IMR-90 (cell line): ENCODE measurements at regions of chr10 and their contacts with region 1.

Region 1: DNA sequence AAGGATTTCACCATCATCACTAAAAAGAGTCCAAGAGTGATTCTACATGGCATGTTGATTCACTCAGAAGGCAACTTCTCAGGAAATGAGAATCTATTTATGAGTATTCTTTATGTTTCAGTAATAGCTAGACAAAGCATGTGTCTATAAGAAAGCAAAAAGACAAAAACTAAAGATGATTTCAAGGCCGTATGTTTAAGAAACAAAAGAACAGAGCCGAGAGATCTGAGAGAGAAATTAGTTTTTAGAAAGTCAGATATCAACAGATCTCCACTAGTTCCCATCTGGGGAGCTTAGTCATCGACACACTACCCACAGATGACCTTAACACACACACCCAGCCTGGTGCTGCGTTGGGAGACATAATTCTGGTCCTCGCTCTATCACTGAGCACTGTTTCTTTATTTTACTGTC is 21.0 kb downstream of the PIP4K2A start:
- DNase-seq: peak; percentile 84
- ATAC-seq: peak; percentile 89
- H3K4me3 ChIP-seq: no peak overlapping the region
- H3K27ac ChIP-seq: no peak overlapping the region
- H3K4me1 ChIP-seq: peaks cover 7% of the 10 kb centered on the region
- H3K27me3 ChIP-seq: no peaks in the 10 kb centered on the region
- CTCF ChIP-seq: no peak
- POLR2A ChIP-seq: no peak
- RAD21 ChIP-seq: no peak

Region 2: GRCh38 chr10:22316285-22317120 is 376.9 kb before region 1 on chr10 and contains the start of gene COMMD3:
- CTCF ChIA-PET with region 1: no interaction called
- POLR2A ChIA-PET with region 1: no interaction called
- dilution Hi-C with region 1: no loop called
- in situ Hi-C with region 1: loop called (anchors 10 kb)
- intact Hi-C with region 1: no loop called
- DNase-seq: peak; percentile 86
- ATAC-seq: peak; percentile 74
- H3K4me3 ChIP-seq: peak within 1 kb of the TSS; percentile 76
- H3K27ac ChIP-seq: peak within 1 kb of the TSS; percentile 93
- H3K4me1 ChIP-seq: no peaks in the 10 kb centered on the region
- H3K27me3 ChIP-seq: peaks cover 2% of the 10 kb centered on the region; the same call in 1 of the 2 replicates
- CTCF ChIP-seq: no peak
- POLR2A ChIP-seq: no peak
- RAD21 ChIP-seq: no peak
- total RNA-seq, gene COMMD3: 33.1 and 44.8 TPM in 2 replicates

Region 3: DNA sequence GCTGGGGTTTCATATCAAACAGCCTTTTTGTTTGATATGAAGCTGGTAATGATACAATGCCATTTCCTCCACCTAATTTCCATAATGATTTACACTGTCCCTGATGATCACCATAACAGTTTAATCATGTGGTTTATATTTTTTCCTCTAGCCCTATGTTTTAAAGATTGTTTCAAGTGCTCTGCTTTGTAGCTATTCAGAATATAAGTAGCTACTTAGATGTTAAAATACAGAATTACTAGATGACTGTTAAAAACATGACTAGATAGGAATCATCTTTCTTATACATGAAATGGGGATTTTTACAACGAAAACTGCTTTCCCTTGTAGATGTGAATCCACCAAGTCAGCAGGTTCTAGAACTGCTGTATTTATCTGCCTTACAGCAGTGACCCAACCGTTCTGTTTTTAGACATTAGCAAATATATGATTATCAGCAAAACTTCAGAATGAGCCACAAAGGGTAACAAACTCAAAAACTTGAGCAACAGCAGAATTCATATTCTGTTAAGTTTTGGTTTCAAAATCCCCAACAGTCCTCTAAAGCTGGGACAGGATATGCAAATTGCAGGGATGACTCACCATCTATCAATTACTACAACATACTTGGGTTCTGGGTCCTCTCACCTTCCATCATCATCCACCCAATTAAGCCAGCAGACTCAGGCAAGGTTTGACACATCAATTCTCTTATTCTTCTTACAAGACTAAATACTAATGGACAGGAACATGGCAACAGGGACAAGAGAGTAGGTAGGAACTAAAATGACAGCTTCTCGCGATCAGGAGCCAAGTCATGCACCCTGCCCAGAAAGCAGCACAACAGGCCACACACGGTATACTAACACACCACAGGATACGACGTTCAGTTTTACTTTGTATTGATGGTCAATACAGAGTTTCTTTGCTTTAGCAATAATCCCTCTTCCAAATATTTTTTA is 62.9 kb before region 1 on chr10:
- CTCF ChIA-PET with region 1: no interaction called
- POLR2A ChIA-PET with region 1: no interaction called
- dilution Hi-C with region 1: no loop called
- in situ Hi-C with region 1: no loop called
- intact Hi-C with region 1: no loop called
- DNase-seq: peak; percentile 67
- ATAC-seq: peak; percentile 50
- H3K4me3 ChIP-seq: no peak overlapping the region
- H3K27ac ChIP-seq: no peak overlapping the region
- H3K4me1 ChIP-seq: peaks cover 9% of the 10 kb centered on the region
- H3K27me3 ChIP-seq: no peaks in the 10 kb centered on the region
- CTCF ChIP-seq: no peak
- POLR2A ChIP-seq: no peak
- RAD21 ChIP-seq: no peak

Region 4: GRCh38 chr10:22681783-22682183 is 11.6 kb before region 1 on chr10:
- CTCF ChIA-PET with region 1: no interaction called
- POLR2A ChIA-PET with region 1: no interaction called
- dilution Hi-C with region 1: no loop called
- in situ Hi-C with region 1: no loop called
- intact Hi-C with region 1: no loop called
- DNase-seq: peak; percentile 74
- ATAC-seq: peak; percentile 80
- H3K4me3 ChIP-seq: no peak overlapping the region
- H3K27ac ChIP-seq: no peak overlapping the region
- H3K4me1 ChIP-seq: peaks cover 20% of the 10 kb centered on the region
- H3K27me3 ChIP-seq: no peaks in the 10 kb centered on the region
- CTCF ChIP-seq: no peak
- POLR2A ChIP-seq: no peak
- RAD21 ChIP-seq: no peak

Region 5: GRCh38 chr10:22780474-22780885 is 87.1 kb after region 1 on chr10:
- CTCF ChIA-PET with region 1: no interaction called
- POLR2A ChIA-PET with region 1: no interaction called
- dilution Hi-C with region 1: no loop called
- in situ Hi-C with region 1: no loop called
- intact Hi-C with region 1: no loop called
- DNase-seq: no peak
- ATAC-seq: no peak
- H3K4me3 ChIP-seq: no peak overlapping the region
- H3K27ac ChIP-seq: no peak overlapping the region
- H3K4me1 ChIP-seq: no peaks in the 10 kb centered on the region
- H3K27me3 ChIP-seq: peaks cover 2% of the 10 kb centered on the region; the same call in 1 of the 2 replicates
- CTCF ChIP-seq: no peak
- POLR2A ChIP-seq: no peak
- RAD21 ChIP-seq: no peak

Region 6: DNA sequence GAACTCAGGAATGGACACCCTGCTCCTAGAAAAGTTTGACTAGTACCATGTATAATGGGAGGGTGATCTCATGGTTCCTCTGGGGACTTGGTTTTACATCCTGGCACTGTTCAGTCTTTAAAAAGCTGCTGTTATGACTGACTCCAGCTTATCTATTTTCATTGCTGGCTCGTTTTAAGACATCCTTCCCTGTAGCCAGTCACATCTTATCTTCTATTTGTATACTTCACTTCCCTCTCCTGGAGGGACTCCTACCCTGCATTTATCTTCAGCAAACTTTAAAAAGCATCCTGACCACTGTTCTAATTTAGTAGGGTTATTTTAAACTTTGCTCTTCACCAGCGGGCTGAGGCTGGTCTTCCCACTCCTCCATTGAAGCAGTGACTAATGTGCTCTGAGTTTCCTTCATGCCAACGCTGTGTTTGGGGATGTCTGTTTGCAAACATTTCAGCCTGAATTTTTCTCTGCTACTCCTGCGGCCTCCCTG is 161.6 kb after region 1 on chr10:
- CTCF ChIA-PET with region 1: no interaction called
- POLR2A ChIA-PET with region 1: no interaction called
- dilution Hi-C with region 1: no loop called
- in situ Hi-C with region 1: no loop called
- intact Hi-C with region 1: no loop called
- DNase-seq: peak; percentile 27
- ATAC-seq: peak; percentile 54
- H3K4me3 ChIP-seq: no peak overlapping the region
- H3K27ac ChIP-seq: no peak overlapping the region
- H3K4me1 ChIP-seq: no peaks in the 10 kb centered on the region
- H3K27me3 ChIP-seq: no peaks in the 10 kb centered on the region
- CTCF ChIP-seq: peak; percentile 33; the same call in 1 of the 2 replicates
- POLR2A ChIP-seq: no peak
- RAD21 ChIP-seq: peak; percentile 35